ENCODE measurements at regions of chr17 and their contacts with region 1.

Region 1: DNA sequence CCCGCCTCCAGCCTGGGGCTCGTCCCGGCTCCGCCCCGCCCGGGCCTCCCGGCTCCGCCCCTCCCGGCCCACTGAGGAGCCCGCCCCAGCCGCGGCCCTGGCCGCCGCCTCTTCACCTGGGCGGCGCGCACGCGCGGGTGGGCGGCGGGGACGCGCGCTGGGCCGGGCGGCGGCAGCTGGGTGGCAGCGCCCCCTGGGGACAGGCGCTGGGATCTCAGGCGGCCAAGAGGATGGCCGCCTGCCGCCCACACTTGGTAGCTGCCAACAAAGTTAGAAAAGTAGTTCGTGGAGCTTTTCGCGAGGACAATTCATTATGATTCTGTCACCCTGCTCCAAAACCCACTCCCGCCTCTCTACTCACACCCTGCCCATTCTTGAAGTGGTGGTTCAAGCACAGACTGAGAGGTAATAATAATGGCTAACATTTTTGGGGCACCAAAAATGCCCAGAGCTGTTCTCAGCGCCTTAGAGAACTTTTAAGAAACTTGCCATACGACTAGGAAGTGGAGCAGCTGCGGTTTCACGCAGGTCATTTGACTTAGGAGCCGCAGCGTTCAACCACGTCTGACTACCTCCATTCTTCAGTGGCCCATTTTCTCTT is 340 bp upstream of the MYO1D start:
- DNase-seq: peak; percentile 67 to 86
- ATAC-seq: peak; percentile 97
- H3K4me3 ChIP-seq: peak overlapping the region; percentile 60 to 85 (median 64)
- H3K27ac ChIP-seq: peak overlapping the region; percentile 38 to 79 (median 57)
- H3K4me1 ChIP-seq: no peaks in the 10 kb centered on the region
- H3K27me3 ChIP-seq: peaks cover 0 to 3% (median 0%) of the 10 kb centered on the region in 3 donors
- CTCF ChIP-seq: peak; percentile 78 to 99 (median 97)
- POLR2A ChIP-seq: no peak

Region 2: DNA sequence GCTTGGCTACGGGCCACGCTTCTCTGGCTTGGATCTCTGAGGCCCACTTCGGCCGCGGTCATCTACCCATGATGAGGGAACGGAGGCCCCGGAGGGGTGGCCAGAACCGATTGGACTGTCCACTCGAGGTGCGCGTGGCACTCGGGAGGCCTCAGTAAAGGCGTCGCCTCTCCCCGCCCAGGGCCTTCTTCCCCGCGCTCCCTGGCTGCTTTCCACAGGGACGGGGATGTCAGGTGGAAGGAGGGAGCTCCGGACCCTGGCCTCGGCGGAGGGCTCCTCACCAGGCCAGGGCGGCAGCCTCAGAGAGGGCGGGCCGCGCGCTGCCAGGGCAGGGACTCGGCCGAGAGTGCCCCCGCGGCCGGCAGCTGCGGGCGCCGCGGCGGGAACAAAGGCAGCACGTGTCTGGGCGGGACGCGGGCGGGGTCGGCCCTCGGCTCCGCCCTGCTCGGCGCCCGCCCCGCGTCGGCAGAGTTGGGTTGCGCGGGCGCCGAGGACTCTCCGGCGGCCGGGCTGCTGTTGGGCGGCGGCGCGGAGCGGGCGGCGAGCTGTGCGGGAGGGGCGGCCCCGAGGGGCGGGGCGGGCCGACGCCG is 391.1 kb before region 1 on chr17:
- in situ Hi-C with region 1: loop called in 1 of 4 experiments (anchors 25 kb)
- intact Hi-C with region 1: no loop called
- DNase-seq: peak; percentile 46 to 71
- ATAC-seq: peak; percentile 72 to 73
- H3K4me3 ChIP-seq: peak overlapping the region; percentile 48 to 75 (median 55)
- H3K27ac ChIP-seq: peak overlapping the region; percentile 79 to 93 (median 86)
- H3K4me1 ChIP-seq: peaks cover 12 to 26% of the 10 kb centered on the region in 2 donors
- H3K27me3 ChIP-seq: no peaks in the 10 kb centered on the region
- CTCF ChIP-seq: no peak
- POLR2A ChIP-seq: peak in 1 of 2 donors; percentile 59

Region 3: GRCh38 chr17:32828822-32829221 is 48.4 kb before region 1 on chr17:
- in situ Hi-C with region 1: no loop called
- intact Hi-C with region 1: loop called (anchors 5 kb)
- DNase-seq: no peak
- ATAC-seq: no peak
- H3K4me3 ChIP-seq: peak overlapping the region in 1 of 4 donors; percentile 11
- H3K27ac ChIP-seq: peak overlapping the region in 2 of 4 donors; percentile 54 to 56
- H3K4me1 ChIP-seq: no peaks in the 10 kb centered on the region
- H3K27me3 ChIP-seq: peaks cover 0 to 7% (median 0%) of the 10 kb centered on the region in 3 donors
- CTCF ChIP-seq: no peak
- POLR2A ChIP-seq: no peak

Region 4: DNA sequence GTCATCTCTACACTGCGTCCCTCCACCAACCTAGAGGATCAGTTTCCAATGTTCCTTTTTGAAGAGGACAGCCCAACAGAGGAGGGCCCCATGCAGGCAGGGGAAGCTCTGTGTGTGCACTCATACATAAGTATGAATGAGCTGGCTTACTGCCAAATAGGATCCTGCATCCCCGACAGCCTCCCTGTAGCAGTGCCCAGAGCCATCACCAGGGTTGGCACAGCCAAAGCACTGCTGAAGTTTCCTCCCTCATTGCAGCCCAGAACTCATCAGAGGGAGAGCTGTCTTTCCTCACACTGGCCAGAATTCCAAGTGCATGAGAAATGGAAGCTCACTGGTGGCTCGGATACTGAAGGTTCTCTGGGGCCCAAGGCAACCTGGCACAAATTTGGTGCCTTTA is 301.4 kb after region 1 on chr17:
- in situ Hi-C with region 1: no loop called
- intact Hi-C with region 1: no loop called
- DNase-seq: no peak
- ATAC-seq: no peak
- H3K4me3 ChIP-seq: no peak overlapping the region
- H3K27ac ChIP-seq: no peak overlapping the region
- H3K4me1 ChIP-seq: no peaks in the 10 kb centered on the region
- H3K27me3 ChIP-seq: peaks cover 2 to 8% (median 5%) of the 10 kb centered on the region in 3 donors
- CTCF ChIP-seq: no peak
- POLR2A ChIP-seq: no peak